Activated CD4-positive, alpha-beta T cell treated with anti-CD3 and anti-CD28 coated beads, Interleukin-2, amount 10 ng/mL, durations not matched to agents 7 days and 5 days (primary cell): ENCODE measurements at regions of chr17 and their contacts with region 1.

Region 1: DNA sequence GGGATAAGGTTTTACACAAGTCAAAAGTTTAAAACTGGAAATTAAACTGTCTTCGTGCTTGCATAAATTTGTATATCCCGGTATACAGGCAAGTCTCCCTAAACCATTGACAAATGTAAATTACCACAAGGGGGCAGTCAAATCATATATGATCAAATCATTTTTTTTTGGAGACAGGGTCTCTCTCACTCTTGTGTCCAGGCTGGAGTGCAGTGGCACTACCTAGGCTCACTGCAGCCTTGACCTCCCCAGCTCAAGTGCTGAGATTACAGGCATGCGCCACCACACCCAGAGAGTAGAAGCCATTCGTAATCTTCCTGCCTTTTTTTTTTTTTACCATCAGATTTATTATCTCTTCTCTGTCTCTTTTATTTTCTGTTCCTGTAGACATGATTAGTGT is 18.5 kb downstream of the TOP2A start:
- DNase-seq: no peak
- H3K4me3 Mint-ChIP-seq: no peak overlapping the region
- H3K27ac Mint-ChIP-seq: peak overlapping the region; percentile 62
- H3K4me1 Mint-ChIP-seq: peaks cover 34% of the 10 kb centered on the region
- H3K27me3 Mint-ChIP-seq: no peaks in the 10 kb centered on the region

Region 2: GRCh38 chr17:40410082-40410481 is 10.9 kb after region 1 on chr17:
- CTCF ChIA-PET with region 1: interaction called, 3 read pairs
- POLR2A ChIA-PET with region 1: interaction called, 11 read pairs
- DNase-seq: no peak
- H3K4me3 Mint-ChIP-seq: no peak overlapping the region
- H3K27ac Mint-ChIP-seq: peak overlapping the region; percentile 2
- H3K4me1 Mint-ChIP-seq: peaks cover 42% of the 10 kb centered on the region
- H3K27me3 Mint-ChIP-seq: no peaks in the 10 kb centered on the region